ENCODE measurements at regions of chr3 and their contacts with region 1.

Region 1: GRCh38 chr3:140898340-140899180 is 43.1 kb upstream of the SLC25A36 start:
- DNase-seq: peak; percentile 83
- H3K4me3 Mint-ChIP-seq: no peak overlapping the region
- H3K27ac Mint-ChIP-seq: no peak overlapping the region
- H3K4me1 Mint-ChIP-seq: peaks cover 10% of the 10 kb centered on the region
- H3K27me3 Mint-ChIP-seq: peaks cover 30% of the 10 kb centered on the region
- CTCF ChIP-seq: peak; percentile 61

Region 2: DNA sequence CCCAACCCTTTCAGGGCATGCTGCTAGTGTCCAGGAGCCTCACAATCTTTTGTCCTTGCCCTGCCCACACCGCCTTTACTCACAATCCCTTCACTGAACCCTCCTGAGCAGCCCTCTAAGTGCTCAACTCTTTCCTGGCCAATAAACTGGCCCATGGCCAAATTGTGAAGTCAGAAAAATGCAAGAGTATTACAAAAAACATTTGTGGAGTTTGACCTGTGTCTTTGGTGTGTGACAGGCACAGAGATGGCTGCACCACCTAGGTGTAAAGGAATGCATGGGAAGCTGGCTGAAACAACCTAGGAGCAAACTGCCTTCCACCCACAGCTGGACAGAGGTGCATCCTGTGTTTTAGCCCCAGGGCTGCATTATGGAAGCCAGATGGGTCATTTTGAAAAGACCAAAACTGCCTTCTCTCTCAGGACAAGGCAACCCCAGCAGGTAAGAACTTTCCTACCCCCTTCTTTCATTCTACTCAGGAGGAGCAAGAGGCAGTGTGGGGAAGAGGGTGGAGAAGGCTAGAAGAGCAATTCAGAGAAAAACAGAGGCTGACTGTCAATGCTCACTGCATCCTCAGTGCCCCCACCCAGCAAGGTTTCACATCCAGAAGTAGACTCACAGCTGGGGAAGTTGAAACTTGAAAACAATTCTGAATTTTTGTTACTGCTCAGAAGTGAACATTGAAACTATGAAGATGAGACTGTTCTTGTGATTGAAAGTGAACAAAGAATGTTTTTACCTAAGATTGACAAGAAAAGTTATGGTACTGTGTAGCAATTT is 142.1 kb before region 1 on chr3:
- CTCF ChIA-PET with region 1: no interaction called
- POLR2A ChIA-PET with region 1: no interaction called
- intact Hi-C with region 1: no loop called
- DNase-seq: peak; percentile 4
- H3K4me3 Mint-ChIP-seq: no peak overlapping the region
- H3K27ac Mint-ChIP-seq: no peak overlapping the region
- H3K4me1 Mint-ChIP-seq: no peaks in the 10 kb centered on the region
- H3K27me3 Mint-ChIP-seq: peaks cover 66% of the 10 kb centered on the region
- CTCF ChIP-seq: no peak

Region 3: DNA sequence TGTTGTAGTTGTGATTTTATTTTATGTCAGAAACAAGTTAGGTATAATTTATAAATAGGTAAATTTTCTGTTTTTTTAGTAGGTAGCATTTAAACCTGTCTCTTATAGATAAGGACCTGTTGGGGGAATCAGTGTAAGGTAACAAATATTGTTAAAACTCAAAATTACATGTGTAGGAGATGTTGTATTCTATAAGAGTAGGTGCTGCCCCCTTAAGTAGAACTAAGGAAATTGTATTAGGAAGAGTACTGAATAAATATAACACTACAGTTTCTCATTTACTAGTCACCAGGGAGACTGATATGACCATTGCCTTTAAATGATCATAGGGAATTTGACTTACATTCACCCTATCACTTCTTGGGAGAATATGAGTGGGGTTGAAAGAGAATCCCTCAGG is 74.3 kb after region 1 on chr3:
- CTCF ChIA-PET with region 1: interaction called, 15 read pairs
- POLR2A ChIA-PET with region 1: interaction called, 4 read pairs
- intact Hi-C with region 1: loop called (anchors 1 kb)
- DNase-seq: peak; percentile 27
- H3K4me3 Mint-ChIP-seq: no peak overlapping the region
- H3K27ac Mint-ChIP-seq: peak overlapping the region; percentile 64
- H3K4me1 Mint-ChIP-seq: no peaks in the 10 kb centered on the region
- H3K27me3 Mint-ChIP-seq: no peaks in the 10 kb centered on the region
- CTCF ChIP-seq: peak; percentile 15

Region 4: GRCh38 chr3:141105828-141106628 is 207.5 kb after region 1 on chr3:
- CTCF ChIA-PET with region 1: interaction called, 13 read pairs
- POLR2A ChIA-PET with region 1: no interaction called
- intact Hi-C with region 1: loop called (anchors 1 kb)
- DNase-seq: peak; percentile 81
- H3K4me3 Mint-ChIP-seq: no peak overlapping the region
- H3K27ac Mint-ChIP-seq: no peak overlapping the region
- H3K4me1 Mint-ChIP-seq: no peaks in the 10 kb centered on the region
- H3K27me3 Mint-ChIP-seq: no peaks in the 10 kb centered on the region
- CTCF ChIP-seq: peak; percentile 65

Region 5: GRCh38 chr3:141114816-141115460 is 216.4 kb after region 1 on chr3:
- CTCF ChIA-PET with region 1: interaction called, 14 read pairs
- POLR2A ChIA-PET with region 1: no interaction called
- intact Hi-C with region 1: no loop called
- DNase-seq: no peak
- H3K4me3 Mint-ChIP-seq: no peak overlapping the region
- H3K27ac Mint-ChIP-seq: no peak overlapping the region
- H3K4me1 Mint-ChIP-seq: no peaks in the 10 kb centered on the region
- H3K27me3 Mint-ChIP-seq: peaks cover 6% of the 10 kb centered on the region
- CTCF ChIP-seq: peak; percentile 26